Tibial artery (tissue), 4 donors: ENCODE measurements at regions of chr6 and their contacts with region 1.

Region 1: GRCh38 chr6:106568530-106568929 is 60.8 kb downstream of the RTN4IP1 start:
- DNase-seq: no peak
- H3K4me3 ChIP-seq: no peak overlapping the region
- H3K27ac ChIP-seq: no peak overlapping the region
- H3K4me1 ChIP-seq: no peaks in the 10 kb centered on the region
- H3K27me3 ChIP-seq: no peaks in the 10 kb centered on the region
- CTCF ChIP-seq: no peak

Region 2: GRCh38 chr6:106056060-106056745 is 512.3 kb before region 1 on chr6:
- intact Hi-C with region 1: no loop called
- DNase-seq: no peak
- H3K4me3 ChIP-seq: no peak overlapping the region
- H3K27ac ChIP-seq: no peak overlapping the region
- H3K4me1 ChIP-seq: no peaks in the 10 kb centered on the region
- H3K27me3 ChIP-seq: no peaks in the 10 kb centered on the region
- CTCF ChIP-seq: no peak

Region 3: DNA sequence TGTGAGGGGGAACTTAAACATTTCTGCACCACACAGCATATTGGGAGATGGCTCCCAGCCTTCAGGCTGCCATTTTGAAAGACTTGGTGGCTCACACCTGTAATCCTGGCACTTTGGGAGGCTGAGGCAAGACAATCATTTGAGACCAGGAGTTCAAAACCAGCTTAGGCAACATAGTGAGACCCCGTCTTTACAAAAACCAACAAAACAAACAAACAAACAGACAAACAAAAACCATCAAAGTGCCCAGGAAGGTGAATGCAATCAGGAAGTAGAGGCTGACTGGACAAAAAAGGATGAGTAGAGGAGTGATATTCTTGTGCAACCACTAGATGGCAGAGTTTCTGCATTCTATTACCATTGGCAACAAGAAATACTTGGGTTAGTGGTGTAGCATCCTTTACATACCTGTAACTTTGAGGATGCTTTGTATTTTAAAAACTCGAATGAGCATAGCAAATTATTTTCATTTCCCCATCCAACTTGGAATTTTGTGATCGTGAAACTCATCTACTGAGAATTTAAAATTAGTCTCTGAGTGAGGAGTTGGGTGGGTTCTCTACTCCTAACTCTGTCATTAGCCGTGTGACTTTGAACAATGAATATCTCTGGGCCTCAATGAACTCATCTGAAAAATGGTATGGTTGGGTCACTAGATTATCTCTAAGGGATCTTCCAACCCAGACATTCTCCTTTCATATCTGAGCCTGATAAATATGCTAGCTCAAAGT is 123.6 kb before region 1 on chr6:
- intact Hi-C with region 1: loop called (anchors 5 kb)
- DNase-seq: no peak
- H3K4me3 ChIP-seq: no peak overlapping the region
- H3K27ac ChIP-seq: no peak overlapping the region
- H3K4me1 ChIP-seq: peaks cover 0 to 5% (median 0%) of the 10 kb centered on the region in 4 donors
- H3K27me3 ChIP-seq: peaks cover 0 to 23% of the 10 kb centered on the region in 2 donors
- CTCF ChIP-seq: peak; percentile 71 to 72